WTC11 (cell line): ENCODE measurements at regions of chr14 and their contacts with region 1.

Region 1: GRCh38 chr14:23120541-23121251 is 1.6 kb upstream of the CEBPE start:
- DNase-seq: peak; percentile 94
- ATAC-seq: peak; percentile 79
- H3K4me3 Mint-ChIP-seq: no peak overlapping the region
- H3K27ac Mint-ChIP-seq: peak overlapping the region; percentile 30; the same call in 1 of the 2 replicates
- H3K4me1 Mint-ChIP-seq: peaks cover 61% of the 10 kb centered on the region
- H3K27me3 Mint-ChIP-seq: peaks cover 4% of the 10 kb centered on the region; the same call in 1 of the 2 replicates
- CTCF ChIP-seq: peak; percentile 98

Region 2: DNA sequence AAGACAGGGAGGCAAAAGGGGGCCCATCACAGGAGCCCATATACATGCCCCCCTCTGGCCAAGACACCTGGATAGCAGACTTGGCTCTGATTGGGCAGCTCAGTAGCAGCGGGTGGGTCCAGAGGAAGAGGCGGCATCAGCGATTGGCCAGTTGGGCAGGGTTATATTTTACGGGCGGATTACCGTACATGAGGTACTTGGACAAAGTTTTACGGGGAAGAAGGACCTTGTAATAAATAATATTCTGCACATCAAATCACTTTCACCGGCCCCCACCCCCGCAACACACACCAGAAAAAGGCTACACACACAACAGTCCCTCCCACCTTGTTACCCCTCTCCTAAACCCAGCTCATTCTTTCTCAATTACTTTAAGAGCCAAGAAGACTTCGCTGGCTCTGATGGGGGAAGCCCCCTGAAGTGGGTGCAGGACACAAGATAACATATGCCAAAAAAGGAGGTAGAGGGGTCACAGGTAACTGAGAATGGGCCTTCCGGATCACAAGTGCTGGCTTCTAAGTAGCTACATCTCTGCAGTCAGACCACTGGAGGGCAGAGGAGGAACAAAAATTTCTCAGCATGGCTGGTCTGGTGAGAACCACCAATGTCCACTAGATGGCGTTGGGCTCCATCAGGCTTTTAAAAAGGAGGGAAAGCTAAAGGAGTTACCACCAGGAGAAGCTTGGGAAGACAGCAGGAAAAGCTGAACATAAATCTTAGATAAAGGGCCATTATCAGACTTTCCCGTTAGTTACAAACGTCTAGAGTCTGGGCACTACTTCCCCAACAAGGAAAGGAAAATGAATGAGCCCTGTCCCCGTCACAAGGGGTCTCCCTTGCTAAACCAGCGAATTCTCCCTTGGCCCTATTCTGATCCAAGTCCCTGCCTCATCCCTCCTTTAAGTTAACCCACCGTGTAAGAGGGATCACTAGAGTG is 52.0 kb before region 1 on chr14:
- CTCF ChIA-PET with region 1: interaction called, 37 read pairs
- POLR2A ChIA-PET with region 1: no interaction called
- DNase-seq: peak; percentile 86
- ATAC-seq: peak; percentile 70
- H3K4me3 Mint-ChIP-seq: peak overlapping the region; percentile 48
- H3K27ac Mint-ChIP-seq: peak overlapping the region; percentile 71; the same call in 1 of the 2 replicates
- H3K4me1 Mint-ChIP-seq: peaks cover 38% of the 10 kb centered on the region
- H3K27me3 Mint-ChIP-seq: no peaks in the 10 kb centered on the region
- CTCF ChIP-seq: peak; percentile 74

Region 3: DNA sequence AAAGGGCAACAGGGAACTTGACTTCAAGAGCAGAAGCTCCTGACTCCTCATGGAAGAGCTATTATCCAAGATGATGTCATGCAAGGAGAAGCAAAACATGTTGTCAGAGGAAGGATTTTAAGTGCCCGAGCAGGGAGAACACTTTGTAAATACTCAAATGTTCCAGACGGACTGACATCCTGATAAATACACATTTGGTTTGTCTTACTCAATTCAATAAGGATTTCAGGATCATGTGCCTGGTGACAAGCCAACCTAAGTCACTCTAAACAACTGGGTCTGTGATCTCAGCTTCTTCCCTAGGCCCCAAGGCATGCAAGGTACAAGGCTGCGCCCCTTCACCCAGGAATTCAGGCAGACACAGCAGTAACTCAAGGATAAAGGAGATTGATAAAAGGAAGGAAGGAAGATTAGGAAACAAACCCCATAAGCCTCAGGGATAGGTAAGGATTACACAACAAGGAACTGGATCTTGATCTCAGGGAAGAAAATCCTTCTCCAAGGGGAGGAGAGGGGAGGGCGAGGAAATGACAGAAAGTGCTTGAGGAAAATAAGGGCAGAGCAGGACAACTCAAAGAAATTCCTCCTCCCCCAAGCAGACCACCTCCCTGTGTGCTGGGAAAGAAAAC is 25.2 kb after region 1 on chr14:
- CTCF ChIA-PET with region 1: interaction called, 11 read pairs
- POLR2A ChIA-PET with region 1: interaction called, 3 read pairs
- DNase-seq: no peak
- ATAC-seq: no peak
- H3K4me3 Mint-ChIP-seq: no peak overlapping the region
- H3K27ac Mint-ChIP-seq: peak overlapping the region; percentile 75
- H3K4me1 Mint-ChIP-seq: peaks cover 10% of the 10 kb centered on the region
- H3K27me3 Mint-ChIP-seq: no peaks in the 10 kb centered on the region
- CTCF ChIP-seq: no peak

Region 4: DNA sequence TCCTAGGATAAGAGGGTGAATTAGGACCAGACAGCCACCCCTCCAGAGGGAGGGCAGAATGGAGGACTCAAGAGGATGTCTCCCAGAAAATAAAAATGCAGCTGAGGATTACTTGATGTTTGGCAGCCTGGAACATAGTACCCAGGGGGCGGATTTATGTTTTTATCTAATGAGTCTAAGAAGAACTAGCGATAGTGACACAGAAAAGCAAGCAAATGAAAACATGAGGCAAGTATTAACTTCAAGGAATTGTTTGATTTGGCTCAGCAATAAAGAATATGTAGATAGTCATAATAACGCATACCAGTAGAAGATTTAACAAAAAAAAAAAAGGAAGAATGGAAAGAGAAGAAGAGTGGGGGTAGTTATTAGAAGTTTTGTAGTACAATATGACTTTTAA is 72.7 kb after region 1 on chr14:
- CTCF ChIA-PET with region 1: interaction called, 372 read pairs
- POLR2A ChIA-PET with region 1: no interaction called
- DNase-seq: no peak
- ATAC-seq: no peak
- H3K4me3 Mint-ChIP-seq: no peak overlapping the region
- H3K27ac Mint-ChIP-seq: peak overlapping the region; percentile 3; the same call in 1 of the 2 replicates
- H3K4me1 Mint-ChIP-seq: peaks cover 30% of the 10 kb centered on the region
- H3K27me3 Mint-ChIP-seq: no peaks in the 10 kb centered on the region
- CTCF ChIP-seq: no peak

Region 5: DNA sequence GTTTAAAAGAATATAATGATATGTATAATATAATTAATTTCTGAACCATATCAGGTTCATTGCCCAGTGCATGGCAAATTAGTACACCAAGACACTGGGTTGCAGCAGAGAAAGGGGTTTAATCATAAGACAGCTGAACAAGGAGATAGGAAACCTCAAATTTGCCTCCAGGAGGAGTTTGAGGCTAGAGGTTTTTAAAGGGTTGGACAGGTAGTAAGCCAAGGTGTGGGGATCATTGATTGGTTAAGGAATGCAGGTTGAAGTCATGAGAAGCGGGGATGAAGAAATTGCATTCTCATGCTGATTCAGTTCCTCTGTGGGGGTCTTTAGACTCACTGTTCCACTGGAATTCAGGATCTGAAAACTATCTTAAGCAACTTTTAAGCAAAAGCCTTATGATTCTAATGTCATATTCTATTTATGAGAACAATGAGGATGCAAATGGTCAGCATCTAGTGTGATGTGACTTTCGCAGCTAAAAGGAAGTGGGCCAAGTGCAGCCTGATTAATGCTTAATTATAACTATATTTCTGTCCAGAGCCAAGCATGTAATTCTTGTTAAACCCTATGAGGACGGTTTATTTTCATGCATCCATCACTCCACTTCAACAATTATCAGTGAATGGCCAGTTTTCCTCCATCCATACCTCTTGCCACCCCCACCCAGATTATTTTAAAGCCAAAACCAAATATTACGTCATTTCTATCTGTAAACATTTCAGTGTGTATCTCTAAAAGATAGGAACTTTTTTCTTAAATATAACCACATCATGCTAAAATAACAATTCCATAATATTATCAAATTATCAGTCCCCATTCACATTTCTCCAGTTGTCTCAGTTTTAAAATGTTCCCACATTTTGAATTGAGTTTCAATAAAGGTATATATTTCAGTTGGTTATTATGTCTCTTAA is 132.0 kb after region 1 on chr14:
- CTCF ChIA-PET with region 1: interaction called, 17 read pairs
- POLR2A ChIA-PET with region 1: no interaction called
- DNase-seq: no peak
- ATAC-seq: peak; percentile 67
- H3K4me3 Mint-ChIP-seq: peak overlapping the region; percentile 7
- H3K27ac Mint-ChIP-seq: peak overlapping the region; percentile 82
- H3K4me1 Mint-ChIP-seq: peaks cover 39% of the 10 kb centered on the region
- H3K27me3 Mint-ChIP-seq: no peaks in the 10 kb centered on the region
- CTCF ChIP-seq: no peak

Region 6: DNA sequence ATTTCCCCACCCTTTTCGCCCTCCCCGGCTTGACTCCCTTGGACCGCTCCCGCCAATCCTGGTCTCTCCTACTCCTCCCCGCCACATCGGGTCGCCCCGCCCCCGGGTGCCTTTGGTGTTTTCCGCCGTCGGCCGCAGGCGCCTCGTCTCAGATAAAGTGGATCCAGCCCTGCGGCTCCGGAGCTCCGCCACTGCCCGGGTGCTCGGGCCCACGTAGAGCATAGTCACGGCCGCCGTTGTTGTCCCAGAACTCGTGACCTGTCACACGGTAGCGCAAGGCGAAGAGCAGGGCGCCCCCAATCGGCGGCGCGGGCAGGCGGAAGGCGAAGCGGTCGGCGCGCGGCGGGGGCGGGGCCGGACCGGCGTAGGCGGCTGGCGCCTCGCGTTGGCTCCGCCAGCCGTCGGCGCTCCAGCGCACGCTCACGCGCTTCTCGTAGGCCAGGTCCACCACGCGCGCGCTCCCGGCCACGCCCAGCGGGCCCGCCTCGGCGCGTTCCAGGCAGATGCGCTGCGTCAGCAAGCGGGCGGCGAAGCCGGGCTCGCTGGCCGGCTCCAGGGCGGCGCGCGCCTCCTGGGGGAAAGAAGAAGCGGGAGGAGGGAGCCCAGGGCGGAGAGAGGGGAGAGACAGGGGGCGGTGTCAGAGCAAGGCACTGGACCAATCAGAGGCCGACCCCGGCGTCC is 180.7 kb after region 1 on chr14:
- CTCF ChIA-PET with region 1: interaction called, 26 read pairs
- POLR2A ChIA-PET with region 1: interaction called, 7 read pairs
- DNase-seq: peak; percentile 98
- ATAC-seq: peak; percentile 83
- H3K4me3 Mint-ChIP-seq: peak overlapping the region; percentile 85
- H3K27ac Mint-ChIP-seq: peak overlapping the region; percentile 91
- H3K4me1 Mint-ChIP-seq: peaks cover 10% of the 10 kb centered on the region
- H3K27me3 Mint-ChIP-seq: peaks cover 63% of the 10 kb centered on the region
- CTCF ChIP-seq: peak; percentile 60; the same call in 1 of the 2 replicates

Region 7: GRCh38 chr14:23366426-23366921 is 245.8 kb after region 1 on chr14:
- CTCF ChIA-PET with region 1: interaction called, 22 read pairs
- POLR2A ChIA-PET with region 1: no interaction called
- DNase-seq: peak; percentile 93
- ATAC-seq: peak; percentile 63
- H3K4me3 Mint-ChIP-seq: peak overlapping the region; percentile 71
- H3K27ac Mint-ChIP-seq: peak overlapping the region; percentile 75
- H3K4me1 Mint-ChIP-seq: peaks cover 27% of the 10 kb centered on the region
- H3K27me3 Mint-ChIP-seq: peaks cover 51% of the 10 kb centered on the region
- CTCF ChIP-seq: no peak